B cell (primary cell): ENCODE measurements at regions of chr6 and their contacts with region 1.

Region 1: DNA sequence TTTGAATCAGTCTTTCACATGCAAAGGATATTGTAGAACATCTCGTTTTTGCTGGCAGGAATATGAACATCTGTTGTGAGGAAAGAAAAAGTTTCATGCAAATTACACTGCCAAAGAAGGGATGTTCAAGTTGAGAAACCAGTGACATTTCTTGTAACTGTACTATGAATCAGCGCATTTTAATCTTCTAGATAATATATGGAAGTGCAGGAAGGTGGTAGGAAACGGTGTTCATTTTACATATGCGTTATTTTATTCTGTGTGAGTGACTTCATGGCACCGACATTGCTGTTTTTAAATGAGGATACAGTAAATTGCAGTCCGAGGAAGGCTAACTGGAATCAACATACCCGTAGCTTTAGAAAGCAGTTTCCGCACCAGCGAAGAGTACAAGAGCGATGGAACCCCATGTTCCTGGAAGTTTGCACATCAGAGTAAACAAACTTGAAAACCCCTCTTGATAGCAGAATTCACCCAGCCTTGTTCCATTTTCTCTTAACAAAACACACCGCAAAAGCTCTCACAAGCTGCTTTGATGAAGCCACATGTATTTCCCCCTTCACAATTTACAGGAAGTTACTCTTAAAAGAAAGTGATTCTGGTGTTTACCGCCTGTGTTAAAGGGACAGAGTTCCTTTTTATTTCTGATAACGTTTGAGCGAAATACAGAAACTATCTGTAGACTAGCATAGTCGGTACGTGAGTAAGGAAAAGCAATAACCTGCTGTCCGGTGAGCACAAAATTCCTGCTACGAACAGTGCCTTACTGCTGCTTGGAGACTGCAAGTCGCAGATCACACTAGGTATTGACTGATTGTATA is 11.5 kb downstream of the PRDM1 start:
- DNase-seq: peak; percentile 82
- ATAC-seq: peak; percentile 74
- H3K4me3 ChIP-seq: peak overlapping the region; percentile 48 to 82 (median 71)
- H3K4me3 Mint-ChIP-seq: peak overlapping the region; percentile 98
- H3K27ac ChIP-seq: peak overlapping the region; percentile 66 to 88
- H3K27ac Mint-ChIP-seq: peak overlapping the region; percentile 96
- H3K4me1 ChIP-seq: peaks cover 20 to 31% of the 10 kb centered on the region in 2 donors
- H3K4me1 Mint-ChIP-seq: peaks cover 75% of the 10 kb centered on the region
- H3K27me3 ChIP-seq: no peaks in the 10 kb centered on the region
- H3K27me3 Mint-ChIP-seq: no peaks in the 10 kb centered on the region
- CTCF ChIP-seq: no peak

Region 2: DNA sequence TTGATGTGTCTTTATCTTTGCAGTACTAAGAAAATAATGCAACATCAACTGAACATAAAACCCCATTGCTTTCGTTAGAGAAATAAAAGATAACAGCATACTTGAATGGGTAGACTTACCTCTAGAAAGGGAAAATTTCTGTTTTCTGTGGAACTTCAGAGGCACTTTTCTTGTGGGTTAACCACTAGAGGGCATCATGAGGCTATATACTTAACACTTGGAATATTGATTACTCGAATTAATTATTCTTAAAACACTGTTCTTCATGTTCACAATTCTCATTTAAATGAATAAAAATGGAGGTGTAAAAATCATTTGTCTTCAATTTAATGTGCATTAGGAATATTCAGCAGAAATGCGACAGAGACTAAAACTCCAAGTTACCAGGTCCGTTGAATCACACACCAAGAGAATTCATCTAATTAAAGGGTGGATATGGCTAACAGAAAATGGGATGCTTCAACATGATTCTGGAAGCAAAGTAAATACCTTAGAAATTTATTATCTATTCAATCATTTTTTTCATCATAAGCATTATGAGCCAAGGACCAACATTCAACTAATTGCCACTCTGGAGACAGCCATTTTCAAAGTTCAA is 364.0 kb before region 1 on chr6:
- CTCF ChIA-PET with region 1: no interaction called
- POLR2A ChIA-PET with region 1: interaction called, 3 read pairs
- intact Hi-C with region 1: loop called (anchors 5 kb)
- DNase-seq: peak; percentile 50
- ATAC-seq: no peak
- H3K4me3 ChIP-seq: no peak overlapping the region
- H3K4me3 Mint-ChIP-seq: no peak overlapping the region
- H3K27ac ChIP-seq: no peak overlapping the region
- H3K27ac Mint-ChIP-seq: no peak overlapping the region
- H3K4me1 ChIP-seq: no peaks in the 10 kb centered on the region
- H3K4me1 Mint-ChIP-seq: no peaks in the 10 kb centered on the region
- H3K27me3 ChIP-seq: no peaks in the 10 kb centered on the region
- H3K27me3 Mint-ChIP-seq: no peaks in the 10 kb centered on the region
- CTCF ChIP-seq: peak; percentile 76

Region 3: DNA sequence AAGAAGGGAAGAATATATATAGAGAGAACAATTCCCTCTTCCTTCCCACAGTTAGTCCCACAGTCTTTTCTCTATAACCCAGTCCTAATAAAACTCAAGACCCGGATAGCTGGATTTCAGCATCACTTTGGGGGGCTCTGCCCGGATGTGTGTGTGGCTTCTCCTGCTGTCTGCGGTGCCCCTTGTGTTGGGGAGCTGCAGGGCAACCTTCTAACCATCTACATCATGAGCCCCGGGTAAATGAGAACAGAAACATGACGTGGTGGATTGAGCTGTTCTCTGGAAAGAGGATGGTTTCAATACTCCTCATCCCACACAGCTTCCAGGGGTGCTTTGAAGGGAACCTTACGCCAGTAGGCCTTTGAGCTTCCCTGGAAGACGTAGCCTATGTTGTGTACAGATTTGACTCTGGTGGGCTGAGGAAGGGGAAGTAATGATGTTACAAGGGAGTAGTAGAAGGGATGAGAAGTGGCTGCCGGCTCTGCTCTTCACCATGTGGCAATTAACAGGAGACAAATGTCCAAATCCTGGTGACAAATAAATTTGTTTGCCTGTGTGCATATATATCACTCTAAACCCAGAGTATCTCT is 25.0 kb before region 1 on chr6:
- CTCF ChIA-PET with region 1: no interaction called
- POLR2A ChIA-PET with region 1: no interaction called
- intact Hi-C with region 1: no loop called
- DNase-seq: no peak
- ATAC-seq: no peak
- H3K4me3 ChIP-seq: no peak overlapping the region
- H3K4me3 Mint-ChIP-seq: no peak overlapping the region
- H3K27ac ChIP-seq: no peak overlapping the region
- H3K27ac Mint-ChIP-seq: no peak overlapping the region
- H3K4me1 ChIP-seq: peaks cover 0 to 4% of the 10 kb centered on the region in 2 donors
- H3K4me1 Mint-ChIP-seq: peaks cover 8% of the 10 kb centered on the region
- H3K27me3 ChIP-seq: peaks cover 0 to 3% (median 0%) of the 10 kb centered on the region in 4 experiments
- H3K27me3 Mint-ChIP-seq: peaks cover 4% of the 10 kb centered on the region
- CTCF ChIP-seq: no peak

Region 4: GRCh38 chr6:106163446-106163965 is 65.9 kb after region 1 on chr6:
- CTCF ChIA-PET with region 1: interaction called, 5 read pairs
- POLR2A ChIA-PET with region 1: interaction called, 4 read pairs
- intact Hi-C with region 1: loop called (anchors 1 kb)
- DNase-seq: peak; percentile 68
- ATAC-seq: peak; percentile 66
- H3K4me3 ChIP-seq: peak overlapping the region in 4 of 5 experiments; percentile 21 to 48 (median 23)
- H3K4me3 Mint-ChIP-seq: peak overlapping the region; percentile 70
- H3K27ac ChIP-seq: peak overlapping the region; percentile 96 to 98
- H3K27ac Mint-ChIP-seq: peak overlapping the region; percentile 88
- H3K4me1 ChIP-seq: peaks cover 22 to 32% of the 10 kb centered on the region in 2 donors
- H3K4me1 Mint-ChIP-seq: peaks cover 31% of the 10 kb centered on the region
- H3K27me3 ChIP-seq: no peaks in the 10 kb centered on the region
- H3K27me3 Mint-ChIP-seq: no peaks in the 10 kb centered on the region
- CTCF ChIP-seq: peak; percentile 9

Region 5: GRCh38 chr6:106325336-106326178 is 227.9 kb after region 1 on chr6 and contains the start of gene ATG5:
- CTCF ChIA-PET with region 1: no interaction called
- POLR2A ChIA-PET with region 1: interaction called, 4 read pairs
- intact Hi-C with region 1: loop called (anchors 5 kb)
- DNase-seq: peak; percentile 99
- ATAC-seq: peak; percentile 92
- H3K4me3 ChIP-seq: peak within 1 kb of the TSS; percentile 87 to 99 (median 94)
- H3K4me3 Mint-ChIP-seq: peak within 1 kb of the TSS; percentile 100
- H3K27ac ChIP-seq: peak within 1 kb of the TSS; percentile 89 to 91
- H3K27ac Mint-ChIP-seq: peak within 1 kb of the TSS; percentile 98
- H3K4me1 ChIP-seq: peaks cover 16 to 20% of the 10 kb centered on the region in 2 donors
- H3K4me1 Mint-ChIP-seq: peaks cover 44% of the 10 kb centered on the region
- H3K27me3 ChIP-seq: peaks cover 0 to 6% (median 4%) of the 10 kb centered on the region in 4 experiments
- H3K27me3 Mint-ChIP-seq: peaks cover 27% of the 10 kb centered on the region
- CTCF ChIP-seq: no peak
- total RNA-seq, gene ATG5: 26.3 and 34.0 TPM in 2 replicates